Activated CD4-positive, alpha-beta T cell treated with anti-CD3 and anti-CD28 coated beads, Interleukin-2, amount 10 ng/mL, durations not matched to agents 7 days and 5 days (primary cell): ENCODE measurements at regions of chr2 and their contacts with region 1.

Region 1: DNA sequence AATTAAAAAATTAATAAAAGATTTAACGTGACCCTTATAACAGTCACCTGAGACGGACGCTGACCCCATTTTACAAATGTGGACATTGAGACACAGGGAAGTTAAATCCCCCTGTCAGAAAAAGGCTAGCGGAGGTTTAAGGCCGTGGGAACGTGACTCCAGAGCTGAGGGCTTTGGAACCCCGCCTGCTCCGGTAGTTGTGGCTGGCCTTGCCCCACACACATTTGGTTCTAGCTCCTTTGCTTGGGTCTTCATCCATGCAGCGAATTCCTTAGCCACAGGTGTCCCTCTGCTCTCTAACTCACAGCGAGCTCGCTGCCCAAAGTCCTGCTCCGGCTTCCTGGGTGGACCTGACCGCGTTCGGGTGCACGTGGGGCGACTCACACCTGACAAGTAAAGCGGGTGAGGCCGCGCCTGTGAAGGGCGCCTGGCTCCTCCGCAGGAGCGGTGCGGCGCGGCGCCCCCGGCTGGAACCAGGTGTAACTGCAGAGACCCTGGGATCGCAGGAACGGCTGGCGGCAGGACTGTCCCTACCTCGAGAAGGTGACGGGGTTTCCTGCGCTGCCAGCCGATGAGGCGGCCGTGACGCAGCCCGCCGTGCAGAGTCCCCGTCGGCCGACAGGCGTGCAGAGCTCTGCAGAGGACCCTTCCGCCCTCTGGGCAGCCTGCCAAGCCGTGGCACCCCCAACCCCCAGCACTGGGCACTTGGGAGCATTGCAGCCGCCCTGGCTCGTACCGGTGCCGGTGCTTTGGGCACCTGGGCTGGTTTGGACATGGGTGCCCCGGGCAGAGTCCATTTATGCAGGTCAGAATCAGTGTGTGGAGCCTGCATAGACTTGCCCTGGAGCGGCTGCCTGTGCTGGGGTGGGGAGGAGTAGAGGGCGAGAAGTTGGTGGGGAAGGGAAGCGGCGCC is 2.4 kb upstream of the PROC start:
- DNase-seq: peak; percentile 72
- H3K4me3 Mint-ChIP-seq: peak overlapping the region; percentile 61
- H3K27ac Mint-ChIP-seq: peak overlapping the region; percentile 55
- H3K4me1 Mint-ChIP-seq: peaks cover 33% of the 10 kb centered on the region
- H3K27me3 Mint-ChIP-seq: peaks cover 17% of the 10 kb centered on the region

Region 2: GRCh38 chr2:127387655-127388422 is 28.0 kb before region 1 on chr2 and contains the start of gene MAP3K2:
- CTCF ChIA-PET with region 1: interaction called, 13 read pairs
- POLR2A ChIA-PET with region 1: no interaction called
- DNase-seq: peak; percentile 91
- H3K4me3 Mint-ChIP-seq: peak within 1 kb of the TSS; percentile 82
- H3K27ac Mint-ChIP-seq: peak within 1 kb of the TSS; percentile 89
- H3K4me1 Mint-ChIP-seq: peaks cover 67% of the 10 kb centered on the region
- H3K27me3 Mint-ChIP-seq: no peaks in the 10 kb centered on the region
- total RNA-seq, gene MAP3K2: 48.9 to 52.9 TPM

Region 3: GRCh38 chr2:127398239-127398590 is 17.6 kb before region 1 on chr2:
- CTCF ChIA-PET with region 1: interaction called, 13 read pairs
- POLR2A ChIA-PET with region 1: no interaction called
- DNase-seq: peak; percentile 41
- H3K4me3 Mint-ChIP-seq: no peak overlapping the region
- H3K27ac Mint-ChIP-seq: no peak overlapping the region
- H3K4me1 Mint-ChIP-seq: peaks cover 14% of the 10 kb centered on the region
- H3K27me3 Mint-ChIP-seq: peaks cover 3% of the 10 kb centered on the region